ENCODE measurements at regions of chr14 and their contacts with region 1.

Region 1: DNA sequence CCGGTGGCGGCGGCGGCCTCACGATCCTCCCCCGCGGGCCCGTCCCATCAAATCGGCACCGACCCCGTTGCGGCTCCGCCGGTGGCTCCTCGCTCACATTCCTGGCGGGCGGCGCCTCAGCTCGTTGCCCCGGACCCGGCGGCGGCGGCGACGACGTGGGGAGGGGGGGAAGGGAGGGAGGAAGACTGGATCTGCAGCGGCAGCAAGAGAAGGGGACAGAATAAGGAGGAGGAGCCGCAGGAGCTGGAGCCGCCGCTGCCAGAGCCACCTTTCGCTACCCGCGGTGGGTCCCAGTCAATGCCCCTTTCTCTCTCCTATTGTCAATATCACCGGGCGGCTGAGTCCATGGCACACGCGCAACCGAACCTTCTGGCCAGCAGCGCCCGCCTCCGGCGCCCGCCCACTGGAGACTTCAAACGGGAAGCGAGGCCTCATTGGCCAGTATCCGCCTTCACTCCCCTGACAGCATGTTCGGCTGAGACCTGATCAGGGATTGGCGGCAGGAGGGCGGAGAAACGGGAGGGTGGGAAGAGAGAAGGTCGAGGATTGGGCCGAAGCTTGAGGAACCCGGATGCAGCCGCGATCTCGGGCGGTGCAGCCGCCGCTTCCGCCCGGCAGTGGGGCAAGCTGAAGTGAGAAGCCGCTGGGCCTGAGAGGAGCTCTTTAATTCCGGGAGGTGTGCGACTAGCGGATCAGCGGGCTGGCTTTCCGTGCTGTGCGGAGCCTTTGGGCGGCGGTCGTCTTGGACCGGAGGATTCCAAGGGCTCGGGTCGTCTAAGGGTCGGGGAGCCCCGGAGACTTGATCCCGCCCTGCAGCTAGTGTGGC is at the start of gene PPP2R5E:
- DNase-seq: peak; percentile 98 to 99 (median 99)
- ATAC-seq: peak; percentile 99 to 100 (median 100)
- H3K4me3 ChIP-seq: peak within 1 kb of the TSS; percentile 83 to 100 (median 94)
- H3K27ac ChIP-seq: peak within 1 kb of the TSS; percentile 54 to 96 (median 92)
- H3K4me1 ChIP-seq: peaks cover 0 to 26% (median 21%) of the 10 kb centered on the region in 12 donors
- H3K27me3 ChIP-seq: no peaks in the 10 kb centered on the region
- CTCF ChIP-seq: peak in 1 of 12 donors; percentile 3
- POLR2A ChIP-seq: peak in 1 of 2 donors; percentile 87
- total RNA-seq, gene PPP2R5E: 16.2 to 44.2 (median 37.6) TPM

Region 2: DNA sequence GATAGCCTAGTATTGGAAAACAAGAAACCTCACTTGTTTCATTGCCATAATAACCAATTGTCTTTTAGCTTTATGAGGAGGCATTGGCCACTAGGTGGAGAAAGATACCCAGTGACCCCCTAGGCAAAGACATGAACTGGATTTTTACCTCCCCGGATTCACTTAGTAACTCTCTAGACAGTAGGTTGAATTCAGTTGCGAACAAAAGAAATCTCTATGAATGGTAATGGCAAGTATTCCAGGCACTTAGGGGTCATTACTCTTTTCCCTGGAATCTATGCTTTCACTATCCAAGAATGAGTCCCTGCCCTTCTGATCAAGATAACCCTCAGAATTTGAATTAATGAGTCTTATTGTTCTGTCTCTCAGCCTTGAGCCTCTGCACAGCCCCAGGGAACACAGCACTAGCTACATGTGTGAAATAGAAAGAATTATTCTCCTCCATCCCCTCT is 368.4 kb before region 1 on chr14:
- intact Hi-C with region 1: loop called in 1 of 10 experiments (anchors 10 kb)
- DNase-seq: peak in 2 of 5 donors; percentile 24 to 40
- ATAC-seq: peak in 3 of 4 donors; percentile 53 to 77 (median 69)
- H3K4me3 ChIP-seq: no peak overlapping the region
- H3K27ac ChIP-seq: peak overlapping the region in 1 of 12 donors; percentile 18
- H3K4me1 ChIP-seq: peaks cover 0 to 21% (median 5%) of the 10 kb centered on the region in 12 donors
- H3K27me3 ChIP-seq: no peaks in the 10 kb centered on the region
- CTCF ChIP-seq: peak; percentile 44 to 86 (median 70)
- POLR2A ChIP-seq: no peak

Region 3: GRCh38 chr14:63342371-63342770 is 200.8 kb before region 1 on chr14:
- intact Hi-C with region 1: no loop called
- DNase-seq: no peak
- ATAC-seq: no peak
- H3K4me3 ChIP-seq: no peak overlapping the region
- H3K27ac ChIP-seq: no peak overlapping the region
- H3K4me1 ChIP-seq: no peaks in the 10 kb centered on the region
- H3K27me3 ChIP-seq: no peaks in the 10 kb centered on the region
- CTCF ChIP-seq: no peak
- POLR2A ChIP-seq: no peak

Region 4: DNA sequence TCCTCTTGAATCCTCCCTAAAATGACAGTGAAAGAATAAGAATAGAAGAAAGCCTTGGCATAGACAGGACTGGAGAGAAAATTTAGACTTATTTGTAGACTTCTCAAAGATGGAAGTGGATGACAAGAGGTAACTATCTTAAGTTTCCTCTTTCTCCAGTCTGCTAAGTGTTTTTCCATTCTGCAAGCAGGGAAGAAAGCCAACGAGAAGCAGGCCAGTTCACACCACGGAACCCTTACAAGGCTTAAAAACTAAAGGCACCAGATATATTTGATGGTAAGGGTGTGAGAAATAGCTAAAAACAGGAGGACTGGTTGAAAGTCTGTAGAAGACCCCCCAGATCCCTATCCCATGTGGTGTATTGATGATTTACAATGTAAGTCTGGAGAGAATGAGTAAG is 141.6 kb before region 1 on chr14:
- intact Hi-C with region 1: loop called in 1 of 10 experiments (anchors 5 kb)
- DNase-seq: no peak
- ATAC-seq: peak in 1 of 4 donors; percentile 28
- H3K4me3 ChIP-seq: no peak overlapping the region
- H3K27ac ChIP-seq: peak overlapping the region in 1 of 12 donors; percentile 8
- H3K4me1 ChIP-seq: peaks cover 0 to 22% (median 9%) of the 10 kb centered on the region in 12 donors
- H3K27me3 ChIP-seq: no peaks in the 10 kb centered on the region
- CTCF ChIP-seq: no peak
- POLR2A ChIP-seq: no peak

Region 5: GRCh38 chr14:63432228-63432627 is 111.0 kb before region 1 on chr14:
- intact Hi-C with region 1: loop called in 4 of 10 experiments (anchors 5 to 10 kb)
- DNase-seq: no peak
- ATAC-seq: no peak
- H3K4me3 ChIP-seq: no peak overlapping the region
- H3K27ac ChIP-seq: peak overlapping the region in 1 of 12 donors; percentile 4
- H3K4me1 ChIP-seq: peaks cover 5 to 53% (median 33%) of the 10 kb centered on the region in 12 donors
- H3K27me3 ChIP-seq: no peaks in the 10 kb centered on the region
- CTCF ChIP-seq: no peak
- POLR2A ChIP-seq: no peak

Region 6: GRCh38 chr14:63493246-63493645 is 50.0 kb before region 1 on chr14:
- intact Hi-C with region 1: loop called in 1 of 10 experiments (anchors 5 kb)
- DNase-seq: no peak
- ATAC-seq: peak; percentile 40 to 75 (median 62)
- H3K4me3 ChIP-seq: no peak overlapping the region
- H3K27ac ChIP-seq: peak overlapping the region in 1 of 12 donors; percentile 4
- H3K4me1 ChIP-seq: peaks cover 0 to 56% (median 18%) of the 10 kb centered on the region in 12 donors
- H3K27me3 ChIP-seq: no peaks in the 10 kb centered on the region
- CTCF ChIP-seq: peak in 3 of 12 donors; percentile 8 to 16 (median 16)
- POLR2A ChIP-seq: no peak

Region 7: DNA sequence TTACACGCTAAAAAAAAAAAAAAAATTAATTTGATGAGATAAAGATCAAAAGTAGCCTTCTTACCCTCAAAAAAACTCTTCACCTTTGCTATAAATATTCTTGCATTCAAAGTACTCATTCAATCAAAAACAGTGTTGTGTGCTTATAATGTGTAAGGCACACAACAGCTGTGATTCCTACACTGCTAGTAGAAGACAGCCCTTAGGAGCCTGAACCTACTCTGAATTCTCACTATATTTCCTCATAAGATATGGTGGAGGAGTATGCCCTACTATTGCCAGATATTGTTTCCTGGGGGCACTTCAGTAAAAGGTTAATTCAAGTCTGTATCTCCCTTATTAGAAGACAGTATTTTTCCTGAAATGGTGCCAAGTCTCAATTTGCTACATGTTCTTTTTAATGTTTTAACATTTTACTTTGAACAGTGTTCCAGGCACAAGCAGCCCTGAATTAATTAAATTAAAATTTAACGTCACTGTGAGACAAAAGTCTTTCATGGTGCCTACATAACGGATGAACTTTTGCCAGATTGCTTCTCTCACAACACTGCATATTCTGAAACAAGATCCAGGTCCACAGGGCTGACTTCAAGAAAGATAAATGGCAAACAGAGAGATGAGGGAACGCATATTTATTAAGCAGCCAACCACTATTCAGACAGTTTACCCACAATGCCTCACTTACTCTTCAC is 19.3 kb before region 1 on chr14:
- intact Hi-C with region 1: no loop called
- DNase-seq: no peak
- ATAC-seq: no peak
- H3K4me3 ChIP-seq: no peak overlapping the region
- H3K27ac ChIP-seq: no peak overlapping the region
- H3K4me1 ChIP-seq: peaks cover 0 to 14% (median 5%) of the 10 kb centered on the region in 12 donors
- H3K27me3 ChIP-seq: no peaks in the 10 kb centered on the region
- CTCF ChIP-seq: no peak
- POLR2A ChIP-seq: no peak

Region 8: GRCh38 chr14:63578300-63578699 is 35.1 kb after region 1 on chr14:
- intact Hi-C with region 1: no loop called
- DNase-seq: no peak
- ATAC-seq: no peak
- H3K4me3 ChIP-seq: no peak overlapping the region
- H3K27ac ChIP-seq: no peak overlapping the region
- H3K4me1 ChIP-seq: no peaks in the 10 kb centered on the region
- H3K27me3 ChIP-seq: no peaks in the 10 kb centered on the region
- CTCF ChIP-seq: no peak
- POLR2A ChIP-seq: no peak

Measured in heart left ventricle (tissue), 16 donors.